ENCODE measurements at regions of chr17 and their contacts with region 1.

Region 1: DNA sequence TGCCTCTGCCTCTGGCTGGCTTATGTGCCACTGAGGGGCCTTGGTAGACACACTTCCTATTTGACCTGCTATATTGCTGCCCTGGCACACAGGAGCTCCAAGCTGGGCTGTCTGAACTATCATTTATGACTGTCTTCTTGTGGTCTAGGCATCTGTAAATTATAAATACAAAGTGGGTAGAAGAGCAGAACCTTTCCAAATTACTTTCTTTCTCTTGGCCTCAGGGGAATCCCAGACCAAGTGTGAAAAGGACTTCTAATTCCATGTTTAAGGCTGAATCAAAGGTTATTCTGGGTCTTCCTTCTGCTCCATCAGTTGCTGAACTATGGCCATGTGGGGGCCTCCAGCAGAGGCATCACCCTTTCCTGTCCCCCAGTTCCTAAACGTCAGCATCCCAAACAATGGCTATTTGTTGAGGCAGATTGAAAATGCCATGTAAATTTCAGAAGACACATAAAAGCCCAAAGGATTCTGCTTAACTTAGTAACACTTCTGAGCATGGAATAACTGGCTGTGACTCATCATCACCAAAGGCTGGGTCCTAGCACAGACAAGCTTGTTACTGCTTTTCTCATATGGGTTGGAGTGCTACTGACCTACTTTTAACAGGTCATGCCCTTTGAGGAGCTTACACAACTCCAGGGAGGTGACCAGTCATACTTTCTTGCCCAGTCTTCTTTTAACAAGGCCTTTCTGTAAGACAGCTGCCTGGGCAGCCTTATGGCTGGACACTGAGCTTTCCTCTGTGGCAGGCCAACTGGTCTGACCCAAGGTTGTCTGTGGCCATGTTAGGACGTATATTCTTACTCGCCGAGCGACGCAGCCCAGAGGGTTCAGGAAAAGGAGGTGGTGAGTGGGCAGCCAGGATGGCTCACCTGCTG is 154.8 kb downstream of the VPS53 start:
- DNase-seq: peak; percentile 73
- H3K4me3 ChIP-seq: no peak overlapping the region
- H3K27ac ChIP-seq: peak overlapping the region; percentile 90
- H3K4me1 ChIP-seq: peaks cover 63% of the 10 kb centered on the region
- H3K27me3 ChIP-seq: no peaks in the 10 kb centered on the region
- CTCF ChIP-seq: no peak
- POLR2A ChIP-seq: no peak

Region 2: DNA sequence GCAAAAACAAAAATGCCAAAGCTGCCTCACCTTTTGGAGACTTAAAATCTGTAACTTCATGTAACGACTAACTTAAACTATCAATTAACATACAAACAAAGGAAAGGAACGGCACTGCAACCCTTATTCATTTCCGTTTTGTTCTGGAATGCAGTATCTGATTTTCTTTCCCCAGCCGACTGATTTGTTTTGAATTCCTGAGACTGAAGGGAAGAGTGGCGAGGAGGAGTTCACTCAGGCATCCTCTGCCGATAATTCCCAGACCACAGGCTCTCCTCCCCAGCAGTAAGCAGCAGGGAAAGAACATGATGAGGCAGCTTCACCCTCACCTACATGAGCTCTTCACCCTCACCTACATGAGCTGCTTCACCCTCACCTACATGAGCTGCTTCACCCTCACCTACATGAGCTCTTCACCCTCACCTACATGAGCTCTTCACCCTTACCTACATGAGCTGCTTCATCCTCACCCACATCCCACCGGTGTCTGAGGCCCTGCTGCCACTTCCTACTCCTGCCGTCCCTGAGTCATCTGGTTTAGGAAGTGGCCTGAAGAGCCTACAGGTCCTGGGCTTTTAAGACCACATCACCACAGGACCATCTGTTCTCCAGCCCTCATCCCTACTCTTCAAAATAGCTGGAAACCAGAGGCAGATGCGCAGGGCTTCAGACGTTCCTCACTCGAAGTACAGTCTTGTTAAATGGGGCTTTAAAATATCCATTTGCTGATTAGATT is 39.2 kb before region 1 on chr17:
- CTCF ChIA-PET with region 1: interaction called, 3 read pairs
- POLR2A ChIA-PET with region 1: no interaction called
- dilution Hi-C with region 1: no loop called
- intact Hi-C with region 1: loop called (anchors 1 kb)
- DNase-seq: peak; percentile 74
- H3K4me3 ChIP-seq: no peak overlapping the region
- H3K27ac ChIP-seq: peak overlapping the region; percentile 80
- H3K4me1 ChIP-seq: peaks cover 38% of the 10 kb centered on the region
- H3K27me3 ChIP-seq: no peaks in the 10 kb centered on the region
- CTCF ChIP-seq: no peak
- POLR2A ChIP-seq: no peak

Region 3: GRCh38 chr17:549177-550040 is 10.4 kb before region 1 on chr17:
- CTCF ChIA-PET with region 1: interaction called, 13 read pairs
- POLR2A ChIA-PET with region 1: no interaction called
- dilution Hi-C with region 1: no loop called
- intact Hi-C with region 1: loop called (anchors 1 kb)
- DNase-seq: peak; percentile 84
- H3K4me3 ChIP-seq: peak overlapping the region in 1 of 3 experiments; percentile 19
- H3K27ac ChIP-seq: peak overlapping the region; percentile 72
- H3K4me1 ChIP-seq: peaks cover 25% of the 10 kb centered on the region
- H3K27me3 ChIP-seq: no peaks in the 10 kb centered on the region
- CTCF ChIP-seq: no peak
- POLR2A ChIP-seq: no peak

Region 4: DNA sequence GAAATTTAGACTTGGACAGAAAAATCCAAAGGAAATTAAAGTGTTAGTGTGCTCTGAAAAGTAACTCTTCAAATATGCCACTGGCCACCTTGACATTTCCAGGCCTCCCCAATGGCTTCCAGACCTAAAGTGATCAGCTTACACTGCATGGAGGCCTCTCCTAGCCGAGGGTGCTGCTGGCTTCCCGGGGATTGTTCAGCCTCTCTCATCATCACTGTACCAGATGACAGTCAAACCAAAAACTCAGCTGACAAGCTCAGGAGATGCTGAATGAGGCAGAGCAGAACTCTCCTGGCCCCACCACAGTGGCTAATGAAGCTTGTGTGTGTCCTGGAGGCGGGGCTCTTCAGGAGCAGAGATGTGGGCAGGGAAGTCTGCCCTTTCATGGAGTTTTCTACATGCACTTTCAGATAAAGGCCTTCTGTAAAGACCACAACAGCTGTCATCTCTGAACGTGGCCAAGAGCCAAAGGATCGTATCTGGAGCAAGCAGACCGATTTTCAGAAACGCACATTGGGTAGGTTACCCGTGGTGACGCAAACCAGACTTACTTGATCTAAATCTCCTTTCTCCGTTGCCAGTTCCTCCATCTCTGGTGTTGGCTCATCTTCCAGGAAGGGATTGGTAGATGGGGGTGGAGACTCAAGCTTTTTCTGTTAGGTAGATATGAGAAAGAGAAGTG is 41.6 kb after region 1 on chr17:
- CTCF ChIA-PET with region 1: interaction called, 6 read pairs
- POLR2A ChIA-PET with region 1: interaction called, 4 read pairs
- dilution Hi-C with region 1: no loop called
- intact Hi-C with region 1: loop called (anchors 2 kb)
- DNase-seq: peak; percentile 88
- H3K4me3 ChIP-seq: no peak overlapping the region
- H3K27ac ChIP-seq: peak overlapping the region; percentile 33
- H3K4me1 ChIP-seq: peaks cover 33% of the 10 kb centered on the region
- H3K27me3 ChIP-seq: no peaks in the 10 kb centered on the region
- CTCF ChIP-seq: no peak
- POLR2A ChIP-seq: no peak

Region 5: DNA sequence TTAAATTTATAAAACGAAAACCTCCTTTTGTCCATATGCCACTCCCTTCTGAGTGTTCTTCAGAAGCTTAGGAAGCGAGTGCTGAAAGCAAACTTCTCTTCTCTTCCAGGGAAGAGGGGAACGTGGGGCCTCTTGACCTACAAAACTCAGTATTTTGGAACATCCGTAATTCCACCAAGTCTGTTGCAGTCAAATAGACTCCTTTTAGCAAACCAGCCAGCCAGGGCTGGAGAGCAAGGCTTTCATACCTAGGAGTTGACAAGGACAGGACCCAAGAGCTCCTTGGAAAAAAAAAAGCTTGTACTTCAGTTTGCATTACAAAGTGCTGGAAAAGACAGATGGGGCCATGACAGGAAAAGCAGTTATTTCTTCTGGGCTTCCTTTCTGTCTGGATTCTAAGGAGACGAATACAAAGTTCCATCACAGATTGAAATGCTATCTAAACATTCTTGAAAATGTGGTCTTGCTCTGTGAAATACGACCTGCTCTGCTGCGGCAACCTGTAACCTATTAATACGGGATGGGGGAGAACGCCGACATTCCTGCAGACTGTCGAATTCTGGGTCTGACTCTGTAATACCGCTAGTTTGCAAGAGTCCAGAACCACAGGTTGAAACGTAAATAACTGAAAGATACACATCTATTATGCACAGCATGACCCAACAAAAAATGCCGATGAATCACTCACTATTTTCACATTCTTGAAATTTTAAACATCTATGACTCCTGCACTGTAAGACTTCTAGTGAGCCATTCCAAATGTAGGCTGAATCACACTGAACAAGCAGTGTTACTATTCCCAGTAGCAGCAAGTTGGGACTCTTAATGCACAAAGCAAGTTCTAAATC is 134.2 kb after region 1 on chr17:
- CTCF ChIA-PET with region 1: interaction called, 6 read pairs
- POLR2A ChIA-PET with region 1: interaction called, 3 read pairs
- dilution Hi-C with region 1: no loop called
- intact Hi-C with region 1: loop called (anchors 1 kb)
- DNase-seq: peak; percentile 78
- H3K4me3 ChIP-seq: peak overlapping the region in 1 of 3 experiments; percentile 20
- H3K27ac ChIP-seq: peak overlapping the region; percentile 95
- H3K4me1 ChIP-seq: peaks cover 27% of the 10 kb centered on the region
- H3K27me3 ChIP-seq: no peaks in the 10 kb centered on the region
- CTCF ChIP-seq: no peak
- POLR2A ChIP-seq: no peak